Activated CD4-positive, alpha-beta memory T cell treated with anti-CD3 and anti-CD28 coated beads, Interleukin-2, amount 10 ng/mL, durations not matched to agents 7 days and 5 days (primary cell): ENCODE measurements at regions of chr20 and their contacts with region 1.

Region 1: GRCh38 chr20:3051385-3052019 is 5.7 kb downstream of the MRPS26 start:
- DNase-seq: no peak
- H3K4me3 Mint-ChIP-seq: no peak overlapping the region
- H3K27ac Mint-ChIP-seq: no peak overlapping the region
- H3K4me1 Mint-ChIP-seq: peaks cover 20% of the 10 kb centered on the region
- H3K27me3 Mint-ChIP-seq: no peaks in the 10 kb centered on the region

Region 2: GRCh38 chr20:3068986-3069900 is 17.7 kb after region 1 on chr20:
- CTCF ChIA-PET with region 1: interaction called, 11 read pairs
- POLR2A ChIA-PET with region 1: interaction called, 3 read pairs
- DNase-seq: peak; percentile 31
- H3K4me3 Mint-ChIP-seq: no peak overlapping the region
- H3K27ac Mint-ChIP-seq: no peak overlapping the region
- H3K4me1 Mint-ChIP-seq: peaks cover 18% of the 10 kb centered on the region
- H3K27me3 Mint-ChIP-seq: peaks cover 12% of the 10 kb centered on the region

Region 3: GRCh38 chr20:3077618-3078134 is 26.2 kb after region 1 on chr20:
- CTCF ChIA-PET with region 1: interaction called, 17 read pairs
- POLR2A ChIA-PET with region 1: interaction called, 3 read pairs
- DNase-seq: peak; percentile 33
- H3K4me3 Mint-ChIP-seq: no peak overlapping the region
- H3K27ac Mint-ChIP-seq: peak overlapping the region; percentile 64
- H3K4me1 Mint-ChIP-seq: peaks cover 34% of the 10 kb centered on the region
- H3K27me3 Mint-ChIP-seq: peaks cover 42% of the 10 kb centered on the region

Region 4: GRCh38 chr20:3090565-3090964 is 39.1 kb after region 1 on chr20:
- CTCF ChIA-PET with region 1: no interaction called
- POLR2A ChIA-PET with region 1: no interaction called
- DNase-seq: no peak
- H3K4me3 Mint-ChIP-seq: no peak overlapping the region
- H3K27ac Mint-ChIP-seq: no peak overlapping the region
- H3K4me1 Mint-ChIP-seq: peaks cover 21% of the 10 kb centered on the region
- H3K27me3 Mint-ChIP-seq: peaks cover 35% of the 10 kb centered on the region

Region 5: DNA sequence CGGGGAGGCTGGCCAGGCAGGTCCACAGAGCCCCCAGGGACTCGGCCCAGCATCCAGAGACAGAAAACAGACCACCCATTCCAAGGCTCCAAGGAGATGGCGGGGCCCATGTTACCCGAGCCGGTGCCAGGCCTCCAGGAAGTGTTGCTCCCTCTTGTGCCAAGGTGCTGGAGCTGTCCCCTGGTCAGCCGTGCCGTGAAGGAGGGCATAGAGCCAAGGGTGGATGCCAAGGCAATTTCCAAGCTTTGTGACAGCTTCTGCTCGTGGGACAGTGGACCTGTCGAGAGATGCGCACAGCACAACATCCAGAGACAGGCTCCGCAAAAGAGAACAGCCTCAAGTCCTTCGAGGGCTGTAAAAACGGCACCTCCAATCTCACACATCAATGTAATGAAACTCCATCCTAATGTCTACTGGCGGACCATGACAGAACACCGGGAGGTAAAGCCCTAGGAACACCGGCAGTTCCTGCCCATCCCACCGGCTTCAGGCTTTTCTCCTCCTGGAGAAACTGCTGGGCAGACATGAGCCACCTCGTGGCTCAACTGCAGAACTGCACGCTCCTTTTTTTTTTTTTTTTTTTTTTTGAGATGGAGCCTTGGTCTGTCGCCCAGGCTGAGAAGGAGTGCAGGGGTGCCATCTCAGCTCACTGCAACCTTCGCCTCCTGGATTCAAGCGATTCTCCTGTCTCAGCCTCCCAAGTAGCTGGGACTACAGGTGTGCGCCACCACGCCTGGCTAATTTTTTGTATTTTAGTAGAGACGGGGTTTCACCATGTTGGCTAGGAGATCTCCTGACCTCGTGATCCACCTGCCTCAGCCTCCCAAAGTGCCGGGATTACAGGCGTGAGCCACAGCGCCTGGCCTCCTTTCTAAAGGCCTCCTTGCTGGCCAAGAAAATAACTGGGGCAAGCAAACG is 63.9 kb after region 1 on chr20:
- CTCF ChIA-PET with region 1: interaction called, 25 read pairs
- POLR2A ChIA-PET with region 1: no interaction called
- DNase-seq: peak; percentile 22
- H3K4me3 Mint-ChIP-seq: no peak overlapping the region
- H3K27ac Mint-ChIP-seq: no peak overlapping the region
- H3K4me1 Mint-ChIP-seq: peaks cover 5% of the 10 kb centered on the region
- H3K27me3 Mint-ChIP-seq: no peaks in the 10 kb centered on the region

Region 6: GRCh38 chr20:3313683-3314065 is 262.2 kb after region 1 on chr20:
- CTCF ChIA-PET with region 1: interaction called, 16 read pairs
- POLR2A ChIA-PET with region 1: no interaction called
- DNase-seq: no peak
- H3K4me3 Mint-ChIP-seq: no peak overlapping the region
- H3K27ac Mint-ChIP-seq: no peak overlapping the region
- H3K4me1 Mint-ChIP-seq: no peaks in the 10 kb centered on the region
- H3K27me3 Mint-ChIP-seq: no peaks in the 10 kb centered on the region